ENCODE measurements at regions of chr5 and their contacts with region 1.

Region 1: GRCh38 chr5:115841382-115842088 is at the starts of genes AP3S1 and ATG12:
- DNase-seq: peak; percentile 95 to 96 (median 96)
- ATAC-seq: peak; percentile 97
- H3K4me3 ChIP-seq: peak within 1 kb of the TSS; percentile 94
- H3K4me1 ChIP-seq: peaks cover 32% of the 10 kb centered on the region
- CTCF ChIP-seq: no peak
- total RNA-seq, gene AP3S1: 75.5 to 94.8 (median 76.2) TPM
- total RNA-seq, gene ATG12: 31.9 to 39.2 (median 37.5) TPM

Region 2: DNA sequence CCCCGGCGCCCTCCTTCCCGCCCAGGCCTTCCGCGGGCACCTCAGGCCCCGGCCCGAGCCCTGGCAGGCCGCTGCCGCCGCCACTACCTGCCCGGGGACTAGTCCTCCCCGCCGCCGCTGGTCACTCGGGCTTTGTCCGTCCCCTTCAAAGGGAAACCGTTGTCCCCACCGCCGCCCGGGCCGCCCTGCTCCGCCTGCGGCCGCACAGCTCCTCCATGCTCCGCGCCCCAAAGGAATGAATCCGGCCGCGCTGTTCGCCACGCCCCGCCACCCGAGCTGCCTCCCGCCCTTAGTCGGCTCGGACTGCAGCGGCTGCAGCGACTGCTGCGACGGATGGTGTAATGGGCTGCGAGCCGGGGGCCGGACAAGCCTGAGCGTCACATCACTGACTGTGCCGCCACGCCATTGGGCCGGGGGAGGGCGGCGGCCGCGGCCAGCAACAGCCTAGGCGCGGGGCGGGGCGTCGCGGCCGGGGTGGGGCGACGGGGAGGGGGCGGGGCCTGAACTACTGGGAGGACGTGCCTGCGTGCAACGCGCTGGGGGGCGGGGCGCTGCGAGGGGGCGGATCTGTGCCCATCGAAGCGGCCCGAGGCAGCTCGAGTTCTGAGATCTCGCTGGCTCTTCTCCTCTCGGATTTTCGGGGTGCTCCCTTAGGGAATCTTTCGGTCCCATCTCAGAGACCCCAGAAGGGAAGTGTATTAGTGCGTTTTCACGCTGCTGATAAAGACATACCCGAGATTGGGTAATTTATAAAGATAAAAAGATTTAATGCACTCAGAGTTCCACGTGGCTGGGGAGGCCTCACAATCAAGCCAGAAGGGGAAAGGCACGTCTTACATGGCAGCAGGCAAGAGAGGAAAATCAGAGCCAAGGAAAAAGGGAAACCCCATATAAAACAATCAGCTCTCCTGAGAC is 296.8 kb before region 1 on chr5 and contains the start of gene FEM1C:
- intact Hi-C with region 1: loop called in 1 of 2 experiments (anchors 5 kb)
- DNase-seq: peak; percentile 99
- ATAC-seq: peak; percentile 95
- H3K4me3 ChIP-seq: peak within 1 kb of the TSS; percentile 80
- H3K4me1 ChIP-seq: peaks cover 21% of the 10 kb centered on the region
- CTCF ChIP-seq: no peak
- total RNA-seq, gene FEM1C: 31.1 to 37.7 (median 33.5) TPM

Region 3: GRCh38 chr5:115625579-115626444 is 215.7 kb before region 1 on chr5 and contains the start of gene TMED7:
- intact Hi-C with region 1: loop called in 1 of 2 experiments (anchors 5 kb)
- DNase-seq: peak; percentile 100
- ATAC-seq: peak; percentile 95
- H3K4me3 ChIP-seq: peak within 1 kb of the TSS; percentile 83
- H3K4me1 ChIP-seq: peaks cover 33% of the 10 kb centered on the region
- CTCF ChIP-seq: peak; percentile 2
- total RNA-seq, gene TMED7: 89.0 to 113 (median 104) TPM